Natural killer cell (primary cell): ENCODE measurements at regions of chr12 and their contacts with region 1.

Region 1: GRCh38 chr12:7995266-7995963 is 37.1 kb upstream of the FOXJ2 start:
- DNase-seq: peak; percentile 62 to 90
- ATAC-seq: peak; percentile 98 to 100 (median 99)
- H3K4me3 ChIP-seq: no peak overlapping the region
- H3K4me3 Mint-ChIP-seq: no peak overlapping the region
- H3K27ac ChIP-seq: peak overlapping the region; percentile 22
- H3K27ac Mint-ChIP-seq: no peak overlapping the region
- H3K4me1 ChIP-seq: peaks cover 7% of the 10 kb centered on the region
- H3K4me1 Mint-ChIP-seq: peaks cover 11 to 12% of the 10 kb centered on the region in 2 donors
- H3K27me3 ChIP-seq: no peaks in the 10 kb centered on the region
- H3K27me3 Mint-ChIP-seq: no peaks in the 10 kb centered on the region
- CTCF ChIP-seq: peak; percentile 78

Region 2: DNA sequence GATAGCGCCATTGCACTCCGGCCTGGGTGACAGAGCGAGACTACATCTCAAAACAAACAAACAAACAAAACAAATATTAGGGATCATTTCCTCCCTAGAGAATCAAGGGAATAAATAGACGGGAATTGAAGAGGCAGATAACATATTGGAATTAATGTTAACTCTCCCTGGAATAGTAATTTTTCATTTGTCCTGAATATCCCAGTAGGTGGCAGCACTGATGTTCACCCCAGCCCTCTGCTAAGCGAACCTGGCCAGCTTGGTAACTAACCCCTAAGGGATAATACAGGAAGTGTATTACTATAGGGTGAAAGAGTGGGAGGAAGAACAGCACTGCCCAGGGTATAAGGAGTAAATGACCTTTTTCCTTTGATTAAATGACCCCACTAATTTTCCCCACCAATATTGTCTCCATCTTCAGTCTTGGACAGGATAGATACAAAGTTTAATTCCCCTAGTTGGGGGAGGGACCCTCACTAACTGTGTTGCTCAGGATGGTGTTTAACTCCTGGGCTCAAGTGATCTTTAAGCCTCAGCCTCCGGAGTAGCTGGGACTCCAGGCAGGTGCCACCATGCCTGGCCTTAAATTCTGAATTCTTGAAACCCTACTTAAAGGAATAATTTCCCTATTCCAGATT is 163.2 kb before region 1 on chr12:
- intact Hi-C with region 1: loop called (anchors 1 kb)
- DNase-seq: peak in 1 of 2 donors; percentile 54
- ATAC-seq: peak; percentile 75 to 84 (median 78)
- H3K4me3 ChIP-seq: no peak overlapping the region
- H3K4me3 Mint-ChIP-seq: no peak overlapping the region
- H3K27ac ChIP-seq: no peak overlapping the region
- H3K27ac Mint-ChIP-seq: no peak overlapping the region
- H3K4me1 ChIP-seq: no peaks in the 10 kb centered on the region
- H3K4me1 Mint-ChIP-seq: peaks cover 0 to 9% of the 10 kb centered on the region in 2 donors
- H3K27me3 ChIP-seq: no peaks in the 10 kb centered on the region
- H3K27me3 Mint-ChIP-seq: peaks cover 0 to 3% of the 10 kb centered on the region in 2 donors
- CTCF ChIP-seq: peak; percentile 59

Region 3: DNA sequence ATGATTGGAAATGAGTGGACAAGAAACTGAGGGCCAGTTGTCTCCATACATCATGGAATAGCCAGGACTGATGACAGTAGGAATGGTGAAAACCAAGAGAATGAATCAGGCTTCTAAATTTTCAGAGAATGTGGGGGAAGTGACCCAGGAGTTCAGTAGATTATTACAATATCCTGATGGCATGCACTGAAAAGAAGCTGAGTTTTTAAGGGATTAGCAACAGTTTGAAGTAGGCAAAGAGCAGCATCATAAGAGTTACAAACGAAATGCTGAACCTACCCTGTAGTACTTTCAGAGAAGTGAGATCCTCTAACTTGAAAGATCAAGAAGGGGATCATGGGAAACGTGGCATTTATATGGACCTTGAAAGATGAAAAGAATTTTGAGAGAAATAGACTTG is 135.9 kb before region 1 on chr12:
- intact Hi-C with region 1: loop called (anchors 2 kb)
- DNase-seq: no peak
- ATAC-seq: no peak
- H3K4me3 ChIP-seq: no peak overlapping the region
- H3K4me3 Mint-ChIP-seq: no peak overlapping the region
- H3K27ac ChIP-seq: no peak overlapping the region
- H3K27ac Mint-ChIP-seq: peak overlapping the region in 1 of 2 donors; percentile 69
- H3K4me1 ChIP-seq: peaks cover 13% of the 10 kb centered on the region
- H3K4me1 Mint-ChIP-seq: peaks cover 15 to 21% of the 10 kb centered on the region in 2 donors
- H3K27me3 ChIP-seq: peaks cover 2% of the 10 kb centered on the region
- H3K27me3 Mint-ChIP-seq: peaks cover 9 to 10% of the 10 kb centered on the region in 2 donors
- CTCF ChIP-seq: no peak

Region 4: DNA sequence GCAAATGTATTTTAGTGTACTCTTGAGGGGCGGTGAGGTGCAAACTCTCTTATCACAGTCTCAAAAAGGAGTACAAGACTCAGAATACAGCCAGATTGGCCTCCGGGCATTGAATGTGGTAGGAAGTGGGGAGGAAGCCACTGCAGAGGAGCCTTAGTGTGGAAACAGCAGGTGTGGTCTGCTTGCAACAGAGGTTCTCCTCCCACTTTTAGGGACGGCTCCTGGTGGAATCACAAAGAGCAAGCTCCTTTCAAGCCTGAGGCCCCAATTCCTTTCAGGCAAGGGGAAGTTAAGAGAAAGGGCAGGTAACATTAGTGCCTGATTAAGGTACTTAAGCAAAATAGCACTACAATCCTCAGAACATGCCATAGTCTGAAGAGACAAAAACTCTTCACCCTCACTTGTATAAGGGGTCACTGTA is 35.7 kb before region 1 on chr12:
- intact Hi-C with region 1: loop called (anchors 1 kb)
- DNase-seq: peak; percentile 42 to 77
- ATAC-seq: peak; percentile 33 to 63 (median 45)
- H3K4me3 ChIP-seq: peak overlapping the region; percentile 46
- H3K4me3 Mint-ChIP-seq: peak overlapping the region; percentile 85
- H3K27ac ChIP-seq: peak overlapping the region; percentile 83
- H3K27ac Mint-ChIP-seq: peak overlapping the region; percentile 88 to 96
- H3K4me1 ChIP-seq: peaks cover 27% of the 10 kb centered on the region
- H3K4me1 Mint-ChIP-seq: peaks cover 32 to 38% of the 10 kb centered on the region in 2 donors
- H3K27me3 ChIP-seq: no peaks in the 10 kb centered on the region
- H3K27me3 Mint-ChIP-seq: no peaks in the 10 kb centered on the region
- CTCF ChIP-seq: no peak